ENCODE measurements at regions of chr20 and their contacts with region 1.

Region 1: DNA sequence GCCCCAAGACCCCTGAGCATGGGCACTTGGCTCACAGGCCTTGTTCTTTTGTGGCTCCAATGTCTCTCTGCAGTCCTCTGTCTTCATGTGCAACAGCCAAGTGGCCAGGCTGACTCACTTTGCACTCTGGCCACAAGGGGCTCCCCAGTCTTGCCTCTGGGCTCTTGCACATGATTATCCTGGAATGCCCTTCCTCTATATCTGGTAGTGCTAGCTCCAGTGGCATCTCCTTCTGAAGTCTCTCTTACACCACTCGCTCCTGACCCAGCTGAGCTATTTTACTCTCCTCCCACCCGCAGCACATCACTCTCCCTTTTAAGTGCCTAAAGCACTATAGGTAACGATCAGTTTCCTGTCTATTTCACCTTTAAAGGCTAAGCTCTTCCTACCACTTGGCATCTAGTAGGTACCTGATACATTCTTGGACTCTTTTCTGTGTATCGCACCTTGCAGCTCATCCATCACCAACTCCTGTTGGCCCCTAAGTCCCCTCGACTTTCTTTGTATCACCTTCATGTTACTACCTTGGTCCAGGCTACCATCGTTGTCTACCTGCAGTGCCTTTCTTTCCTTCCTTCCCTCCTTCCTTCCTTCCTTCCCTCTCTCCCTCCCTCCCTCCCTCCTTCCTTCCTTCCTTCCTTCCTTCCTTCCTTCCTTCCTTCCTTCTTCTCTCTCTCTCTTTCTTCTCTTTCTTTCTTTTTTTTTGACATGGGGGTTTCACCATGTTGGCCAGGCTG is 211.9 kb upstream of the RNF24 start:
- DNase-seq: no peak
- H3K4me3 ChIP-seq: no peak overlapping the region
- H3K27ac ChIP-seq: peak overlapping the region; percentile 82 to 89
- H3K4me1 ChIP-seq: peaks cover 0 to 39% of the 10 kb centered on the region in 2 donors
- H3K27me3 ChIP-seq: no peaks in the 10 kb centered on the region
- CTCF ChIP-seq: peak in 2 of 3 experiments; percentile 35 to 43

Region 2: GRCh38 chr20:4195499-4195898 is 31.8 kb before region 1 on chr20:
- intact Hi-C with region 1: no loop called
- DNase-seq: no peak
- H3K4me3 ChIP-seq: no peak overlapping the region
- H3K27ac ChIP-seq: no peak overlapping the region
- H3K4me1 ChIP-seq: no peaks in the 10 kb centered on the region
- H3K27me3 ChIP-seq: no peaks in the 10 kb centered on the region
- CTCF ChIP-seq: peak in 1 of 3 experiments; percentile 39

Region 3: DNA sequence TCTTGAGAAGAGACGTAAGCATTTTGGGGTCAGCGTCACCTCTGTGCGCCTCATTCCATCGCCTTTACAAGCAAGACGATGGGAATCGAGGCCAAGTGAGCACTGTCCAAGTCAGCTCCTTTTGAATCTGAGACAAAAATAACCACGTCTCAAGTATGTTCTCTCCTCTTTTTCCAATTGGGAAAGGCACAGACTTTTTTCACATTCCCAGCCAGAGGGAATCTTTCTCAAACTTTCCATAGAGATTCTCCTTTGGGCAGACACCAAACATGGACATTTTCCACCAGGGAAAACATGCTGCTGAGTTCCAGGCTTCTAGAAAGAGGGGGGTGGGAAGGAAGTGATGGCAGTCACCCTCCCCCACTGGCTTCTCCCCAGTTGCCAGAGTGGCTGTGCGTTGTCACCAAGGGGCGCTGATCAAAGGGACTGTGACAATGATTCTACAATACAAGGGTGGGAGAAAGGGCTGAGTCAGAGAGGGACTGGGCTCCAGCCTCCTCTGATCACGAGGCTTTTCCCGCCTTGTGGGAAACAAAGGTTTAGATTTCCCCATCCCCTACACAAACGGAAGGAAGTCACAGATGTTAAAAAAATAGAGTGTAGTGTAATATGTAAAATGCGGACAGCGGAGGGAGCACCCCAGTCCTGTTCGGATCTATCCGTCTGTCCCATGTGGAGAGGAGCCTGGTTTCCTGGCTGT is 70.0 kb after region 1 on chr20:
- intact Hi-C with region 1: loop called (anchors 5 kb)
- DNase-seq: peak in 1 of 2 donors; percentile 90
- H3K4me3 ChIP-seq: no peak overlapping the region
- H3K27ac ChIP-seq: peak overlapping the region; percentile 64 to 82
- H3K4me1 ChIP-seq: peaks cover 0 to 8% of the 10 kb centered on the region in 2 donors
- H3K27me3 ChIP-seq: no peaks in the 10 kb centered on the region
- CTCF ChIP-seq: no peak